ENCODE measurements at regions of chr7 and their contacts with region 1.

Region 1: GRCh38 chr7:1473864-1474512 is 14.7 kb upstream of the MICALL2 start:
- DNase-seq: peak; percentile 77 to 88
- ATAC-seq: peak; percentile 59 to 79
- H3K4me3 ChIP-seq: no peak overlapping the region
- H3K27ac ChIP-seq: peak overlapping the region in 1 of 2 experiments; percentile 76; a peak in 3 of 6 replicates
- H3K4me1 ChIP-seq: peaks cover 3% of the 10 kb centered on the region; the same call in 1 of the 3 replicates
- CTCF ChIP-seq: peak; percentile 73
- EP300 ChIP-seq: no peak
- POLR2A ChIP-seq: no peak
- RAD21 ChIP-seq: peak; percentile 74 to 76

Region 2: GRCh38 chr7:1425292-1426136 is 48.5 kb before region 1 on chr7:
- CTCF ChIA-PET with region 1: interaction called, 12 read pairs
- POLR2A ChIA-PET with region 1: no interaction called
- DNase-seq: peak in 1 of 2 experiments; percentile 64
- ATAC-seq: peak; percentile 58 to 78; a peak in 5 of 6 replicates
- H3K4me3 ChIP-seq: no peak overlapping the region
- H3K27ac ChIP-seq: no peak overlapping the region
- H3K4me1 ChIP-seq: no peaks in the 10 kb centered on the region
- CTCF ChIP-seq: no peak
- EP300 ChIP-seq: no peak
- POLR2A ChIP-seq: no peak
- RAD21 ChIP-seq: no peak

Region 3: GRCh38 chr7:1439373-1440363 is 34.3 kb before region 1 on chr7:
- CTCF ChIA-PET with region 1: interaction called, 11 read pairs
- POLR2A ChIA-PET with region 1: no interaction called
- DNase-seq: no peak
- ATAC-seq: no peak
- H3K4me3 ChIP-seq: no peak overlapping the region
- H3K27ac ChIP-seq: no peak overlapping the region
- H3K4me1 ChIP-seq: no peaks in the 10 kb centered on the region
- CTCF ChIP-seq: no peak
- EP300 ChIP-seq: no peak
- POLR2A ChIP-seq: no peak
- RAD21 ChIP-seq: 0 out of 5 replicates have a peak, but pooled peaks of 1 of the 2 experiments have one; percentile 10

Region 4: GRCh38 chr7:1488016-1488415 is 14.0 kb after region 1 on chr7:
- CTCF ChIA-PET with region 1: interaction called, 103 read pairs
- POLR2A ChIA-PET with region 1: no interaction called
- DNase-seq: no peak
- ATAC-seq: no peak
- H3K4me3 ChIP-seq: no peak overlapping the region
- H3K27ac ChIP-seq: no peak overlapping the region
- H3K4me1 ChIP-seq: no peaks in the 10 kb centered on the region
- CTCF ChIP-seq: no peak
- EP300 ChIP-seq: no peak
- POLR2A ChIP-seq: no peak
- RAD21 ChIP-seq: no peak

Region 5: GRCh38 chr7:1503816-1504775 is 30.1 kb after region 1 on chr7 and contains the start of gene INTS1:
- CTCF ChIA-PET with region 1: interaction called, 48 read pairs
- POLR2A ChIA-PET with region 1: no interaction called
- DNase-seq: peak; percentile 85 to 95
- ATAC-seq: peak; percentile 86 to 87
- H3K4me3 ChIP-seq: peak within 1 kb of the TSS; percentile 93
- H3K27ac ChIP-seq: peak within 1 kb of the TSS; percentile 87 to 98
- H3K4me1 ChIP-seq: peaks cover 51% of the 10 kb centered on the region
- CTCF ChIP-seq: peak; percentile 86
- EP300 ChIP-seq: peak in 1 of 2 experiments; percentile 16; a peak in 1 of 5 replicates
- POLR2A ChIP-seq: peak; percentile 9
- RAD21 ChIP-seq: peak; percentile 33 to 73; a peak in 4 of 5 replicates
- polyA plus RNA-seq, gene INTS1: 14.6 and 18.4 TPM in 2 replicates